Esophagus muscularis mucosa (tissue), 4 donors: ENCODE measurements at regions of chr6 and their contacts with region 1.

Region 1: DNA sequence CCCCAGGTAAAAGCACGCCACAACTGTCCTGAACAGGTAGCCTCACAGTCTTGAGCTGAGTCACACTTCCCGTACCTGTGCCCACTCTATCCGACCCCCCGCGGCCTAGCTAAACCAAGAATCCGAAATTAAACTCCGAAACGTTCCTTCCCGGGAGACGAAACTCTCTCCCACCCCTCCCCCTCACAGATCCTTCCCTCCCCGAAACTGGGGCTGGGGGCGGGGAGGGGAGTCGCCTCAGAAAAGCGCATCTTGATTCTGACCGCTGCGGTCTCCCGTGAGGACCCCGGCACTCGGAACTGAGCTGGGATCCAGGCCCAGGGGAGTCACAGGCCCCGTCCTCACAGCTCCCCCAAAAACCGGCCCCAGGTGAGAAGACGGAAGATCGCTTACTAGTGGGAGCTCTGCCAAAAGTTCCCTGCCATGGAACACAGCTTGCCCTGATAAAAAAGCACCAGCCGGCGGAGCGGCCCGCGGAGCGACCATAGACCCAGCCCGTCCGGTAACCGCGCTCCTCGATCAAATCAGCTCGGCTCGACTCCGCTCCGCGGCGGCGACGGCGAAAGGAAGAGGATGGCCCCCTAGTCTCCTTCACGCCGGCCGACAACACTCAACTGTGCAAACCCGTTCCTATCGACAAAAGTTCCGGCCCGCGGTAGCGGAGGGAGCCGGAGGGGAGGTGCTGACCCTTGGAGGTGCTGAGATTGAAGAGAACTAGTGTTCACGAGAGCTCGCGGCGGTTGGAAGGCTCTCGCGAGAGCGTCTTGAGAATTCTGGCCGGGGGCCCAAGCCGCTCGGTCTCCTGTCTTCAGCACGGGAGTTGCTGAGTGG is at the start of gene CCNC:
- DNase-seq: peak; percentile 98
- H3K4me3 ChIP-seq: peak within 1 kb of the TSS; percentile 77 to 97 (median 86)
- H3K27ac ChIP-seq: peak within 1 kb of the TSS; percentile 79 to 82 (median 80)
- H3K4me1 ChIP-seq: peaks cover 13 to 25% (median 18%) of the 10 kb centered on the region in 4 donors
- H3K27me3 ChIP-seq: no peaks in the 10 kb centered on the region
- CTCF ChIP-seq: peak in 1 of 3 experiments; percentile 20
- EP300 ChIP-seq: no peak
- POLR2A ChIP-seq: no peak
- total RNA-seq, gene CCNC: 27.4 to 50.7 (median 45.1) TPM

Region 2: GRCh38 chr6:99520855-99521632 is 47.3 kb before region 1 on chr6:
- intact Hi-C with region 1: loop called (anchors 5 kb)
- DNase-seq: peak; percentile 94
- H3K4me3 ChIP-seq: peak overlapping the region; percentile 63 to 89 (median 81)
- H3K27ac ChIP-seq: peak overlapping the region; percentile 87 to 94 (median 90)
- H3K4me1 ChIP-seq: peaks cover 9 to 44% (median 22%) of the 10 kb centered on the region in 4 donors
- H3K27me3 ChIP-seq: no peaks in the 10 kb centered on the region
- CTCF ChIP-seq: peak; percentile 88 to 96 (median 89)
- EP300 ChIP-seq: no peak
- POLR2A ChIP-seq: peak; percentile 83

Region 3: DNA sequence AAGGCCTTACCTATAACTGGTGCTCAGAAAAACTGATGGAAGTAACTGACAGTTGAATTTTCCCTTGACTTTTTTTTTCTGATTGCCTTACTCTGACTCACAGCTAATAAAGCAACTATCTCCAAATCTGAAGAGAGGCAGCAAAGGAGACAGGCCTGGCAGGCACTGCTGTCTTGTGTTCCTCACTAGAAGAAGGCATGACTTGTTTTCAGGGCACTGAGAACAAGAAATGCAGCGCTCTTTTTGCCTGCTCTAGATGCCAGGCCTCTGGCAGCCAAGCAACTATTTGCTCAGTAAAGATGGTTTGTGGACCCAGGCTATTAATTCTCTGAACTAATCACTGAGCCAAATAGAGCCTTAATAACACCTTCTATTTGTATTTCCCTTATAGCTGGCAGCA is 193.4 kb after region 1 on chr6:
- intact Hi-C with region 1: no loop called
- DNase-seq: no peak
- H3K4me3 ChIP-seq: no peak overlapping the region
- H3K27ac ChIP-seq: no peak overlapping the region
- H3K4me1 ChIP-seq: no peaks in the 10 kb centered on the region
- H3K27me3 ChIP-seq: no peaks in the 10 kb centered on the region
- CTCF ChIP-seq: no peak
- EP300 ChIP-seq: no peak
- POLR2A ChIP-seq: no peak